K562 (cell line): ENCODE measurements at regions of chr7 and their contacts with region 1.

Region 1: GRCh38 chr7:131688738-131689661 is 132.6 kb upstream of the PODXL start:
- DNase-seq: peak; percentile 83 to 96 (median 94)
- ATAC-seq: peak; percentile 87
- H3K4me3 ChIP-seq: no peak overlapping the region
- H3K27ac ChIP-seq: no peak overlapping the region
- H3K4me1 ChIP-seq: peaks cover 0 to 8% of the 10 kb centered on the region in 2 experiments; a peak in 2 of 5 replicates
- H3K27me3 ChIP-seq: peaks cover 22 to 66% of the 10 kb centered on the region in 2 experiments
- CTCF ChIP-seq: peak; percentile 93 to 99 (median 98)
- EP300 ChIP-seq: no peak
- POLR2A ChIP-seq: no peak
- RAD21 ChIP-seq: peak; percentile 90 to 96

Region 2: DNA sequence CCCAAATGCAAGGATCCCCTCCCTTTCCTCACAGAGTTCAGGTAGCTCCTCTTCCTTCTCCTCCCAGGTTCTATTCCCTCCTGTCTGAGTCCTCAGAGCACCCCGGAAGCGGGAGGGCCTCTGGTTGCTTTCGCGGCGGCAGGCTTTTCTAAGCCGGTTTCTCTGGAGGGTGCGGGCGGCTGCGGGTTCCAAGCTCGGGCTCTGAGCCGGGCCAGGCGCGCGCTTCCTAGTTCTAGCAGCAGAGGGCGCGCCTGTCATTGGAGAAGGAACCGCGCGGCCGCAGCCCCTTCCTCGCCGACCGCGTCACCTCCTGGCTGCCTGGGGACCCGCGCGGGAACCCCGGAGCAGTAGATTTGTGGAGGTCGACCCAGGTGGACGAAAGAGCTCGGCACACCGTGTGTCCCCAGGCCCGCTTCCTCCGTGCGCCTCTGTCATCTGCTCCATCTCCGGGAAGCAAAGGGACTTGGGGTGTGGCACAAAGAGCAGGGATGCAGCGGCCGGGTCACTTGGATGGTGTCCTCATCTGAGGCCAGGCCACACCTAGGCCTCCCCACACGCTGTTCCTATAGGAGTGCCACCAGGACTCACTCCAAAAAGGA is 256.4 kb after region 1 on chr7:
- CTCF ChIA-PET with region 1: no interaction called
- POLR2A ChIA-PET with region 1: no interaction called
- in situ Hi-C with region 1: no loop called
- intact Hi-C with region 1: loop called (anchors 5 kb)
- DNase-seq: peak; percentile 68 to 89 (median 82)
- ATAC-seq: peak; percentile 99
- H3K4me3 ChIP-seq: no peak overlapping the region
- H3K27ac ChIP-seq: no peak overlapping the region
- H3K4me1 ChIP-seq: peaks cover 0 to 7% of the 10 kb centered on the region in 2 experiments; a peak in 1 of 5 replicates
- H3K27me3 ChIP-seq: peaks cover 5 to 43% of the 10 kb centered on the region in 2 experiments; a peak in 4 of 5 replicates
- CTCF ChIP-seq: peak; percentile 89 to 96 (median 90)
- EP300 ChIP-seq: no peak
- POLR2A ChIP-seq: no peak
- RAD21 ChIP-seq: peak; percentile 86 to 89

Region 3: DNA sequence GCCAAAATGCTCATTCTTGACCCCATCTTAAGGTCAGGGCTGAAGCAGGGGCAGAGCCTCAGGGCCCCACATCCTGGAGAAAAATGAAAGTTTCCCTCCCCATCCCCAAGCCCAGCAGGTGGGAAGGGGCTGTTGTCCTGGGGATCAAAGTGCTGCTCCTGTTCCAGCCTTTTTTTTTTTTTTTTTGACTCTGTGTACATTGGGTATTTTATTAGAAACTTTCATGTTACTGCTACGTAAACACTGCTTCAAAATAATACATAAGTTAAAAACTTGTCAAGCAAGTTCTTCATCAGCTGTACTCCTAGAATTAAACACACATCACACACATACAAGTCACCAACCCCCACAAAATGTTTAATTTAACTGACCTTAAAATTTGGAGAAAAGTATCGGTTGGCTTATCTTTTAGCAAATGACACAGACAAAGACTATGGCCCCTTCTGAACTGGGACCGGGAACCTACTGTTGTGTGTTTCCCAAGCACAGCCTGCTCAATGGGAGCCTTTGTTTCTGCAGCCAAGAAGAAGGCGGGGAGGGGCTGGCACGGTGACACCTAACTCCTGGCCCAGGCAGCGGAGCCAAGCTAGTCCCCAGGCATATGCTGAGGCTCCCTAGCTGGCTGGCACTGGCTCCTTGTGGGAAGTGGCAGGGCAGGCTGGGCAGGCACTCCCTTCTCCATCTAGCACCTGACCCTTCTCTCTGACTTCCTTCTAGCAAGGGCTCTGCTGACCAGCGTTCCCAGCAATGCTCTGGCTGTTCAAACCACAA is 562.1 kb after region 1 on chr7:
- CTCF ChIA-PET with region 1: interaction called, 3 read pairs
- POLR2A ChIA-PET with region 1: no interaction called
- in situ Hi-C with region 1: no loop called
- intact Hi-C with region 1: loop called (anchors 5 kb)
- DNase-seq: no peak
- ATAC-seq: no peak
- H3K4me3 ChIP-seq: no peak overlapping the region
- H3K27ac ChIP-seq: no peak overlapping the region
- H3K4me1 ChIP-seq: no peaks in the 10 kb centered on the region
- H3K27me3 ChIP-seq: peaks cover 2 to 6% of the 10 kb centered on the region in 2 experiments; a peak in 2 of 5 replicates
- CTCF ChIP-seq: no peak
- EP300 ChIP-seq: no peak
- POLR2A ChIP-seq: no peak
- RAD21 ChIP-seq: no peak

Region 4: GRCh38 chr7:132580717-132581285 is 891.8 kb after region 1 on chr7:
- CTCF ChIA-PET with region 1: no interaction called
- POLR2A ChIA-PET with region 1: no interaction called
- in situ Hi-C with region 1: loop called (anchors 10 kb)
- intact Hi-C with region 1: loop called (anchors 2 kb)
- DNase-seq: peak; percentile 77 to 88 (median 80)
- ATAC-seq: peak; percentile 98
- H3K4me3 ChIP-seq: no peak overlapping the region
- H3K27ac ChIP-seq: no peak overlapping the region
- H3K4me1 ChIP-seq: peaks cover 0 to 8% of the 10 kb centered on the region in 2 experiments; a peak in 1 of 5 replicates
- H3K27me3 ChIP-seq: peaks cover 26 to 28% of the 10 kb centered on the region in 2 experiments; a peak in 4 of 5 replicates
- CTCF ChIP-seq: peak; percentile 91 to 94 (median 93)
- EP300 ChIP-seq: no peak
- POLR2A ChIP-seq: no peak
- RAD21 ChIP-seq: peak; percentile 88 to 90